Cardiac septum (tissue), 1 donor: ENCODE measurements at regions of chr17 and their contacts with region 1.

Region 1: GRCh38 chr17:2672026-2672425 is 39.5 kb downstream of the CLUH start:
- DNase-seq: no peak

Region 2: GRCh38 chr17:2521257-2521656 is 150.8 kb before region 1 on chr17:
- intact Hi-C with region 1: loop called (anchors 10 kb)
- DNase-seq: no peak

Region 3: DNA sequence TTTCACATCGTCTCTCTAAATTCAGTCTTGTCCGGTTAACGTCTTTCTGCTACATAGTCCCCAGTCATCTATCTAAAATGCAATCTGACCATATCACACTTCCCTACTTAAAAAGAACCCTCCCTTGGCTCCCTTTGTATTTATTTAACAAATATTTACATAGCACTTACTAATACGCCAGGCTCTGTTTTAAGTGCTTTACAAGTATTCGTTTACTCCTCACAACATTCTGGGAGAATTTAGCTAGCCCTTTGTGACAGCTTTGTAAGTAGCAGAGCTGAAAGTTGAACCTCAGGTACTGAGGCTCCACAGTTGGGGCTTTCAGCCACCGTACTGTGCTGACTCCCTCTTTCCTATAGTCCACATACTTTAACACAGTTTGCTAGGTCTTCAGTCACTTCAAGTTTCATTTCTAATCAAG is 69.4 kb before region 1 on chr17:
- intact Hi-C with region 1: loop called (anchors 5 kb)
- DNase-seq: no peak